ENCODE measurements at regions of chr19 and their contacts with region 1.

Region 1: GRCh38 chr19:13430790-13431582 is 75.3 kb downstream of the CACNA1A start:
- DNase-seq: peak; percentile 39
- H3K4me3 ChIP-seq: no peak overlapping the region
- H3K27ac ChIP-seq: no peak overlapping the region
- H3K4me1 ChIP-seq: peaks cover 10% of the 10 kb centered on the region
- H3K27me3 ChIP-seq: no peaks in the 10 kb centered on the region
- CTCF ChIP-seq: peak; percentile 76 to 84
- POLR2A ChIP-seq: no peak

Region 2: DNA sequence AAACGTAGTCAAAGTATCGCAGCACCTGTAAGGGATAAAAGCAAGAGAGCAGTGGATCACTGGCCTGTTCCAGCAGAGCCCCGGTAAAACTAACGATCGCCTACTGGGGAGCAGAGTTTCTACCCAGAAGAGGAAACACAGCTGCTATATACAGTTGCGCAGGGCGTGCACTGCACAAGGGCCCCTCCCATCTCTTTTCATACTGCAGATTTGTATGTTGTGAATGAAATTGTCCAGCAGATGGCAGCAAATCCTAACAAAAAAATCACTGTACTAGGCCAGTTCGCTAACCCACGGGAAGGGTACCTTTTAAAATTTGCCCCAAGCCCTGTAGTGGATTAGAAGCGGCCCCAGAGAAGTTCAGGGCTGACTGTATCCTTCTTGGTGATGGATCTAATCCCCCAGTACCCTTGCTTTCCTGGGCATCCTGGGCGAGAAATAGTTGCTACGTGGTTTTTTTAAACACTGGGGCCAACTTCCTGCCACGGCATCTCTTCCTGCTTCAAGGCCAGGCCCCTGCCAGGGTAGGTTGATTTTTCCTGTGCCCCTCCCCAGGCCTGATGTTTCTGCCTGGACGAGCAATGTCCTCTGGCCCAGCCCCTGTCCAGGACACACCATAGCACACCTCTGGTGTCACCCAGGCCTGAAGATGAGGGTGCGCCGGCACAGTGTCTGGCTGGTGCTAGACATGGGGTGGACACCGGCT is 153.7 kb before region 1 on chr19:
- CTCF ChIA-PET with region 1: interaction called, 37 read pairs
- POLR2A ChIA-PET with region 1: no interaction called
- dilution Hi-C with region 1: no loop called
- intact Hi-C with region 1: loop called (anchors 1 kb)
- DNase-seq: peak; percentile 78
- H3K4me3 ChIP-seq: no peak overlapping the region
- H3K27ac ChIP-seq: peak overlapping the region; percentile 4
- H3K4me1 ChIP-seq: peaks cover 5% of the 10 kb centered on the region
- H3K27me3 ChIP-seq: no peaks in the 10 kb centered on the region
- CTCF ChIP-seq: peak; percentile 41 to 61
- POLR2A ChIP-seq: no peak

Region 3: DNA sequence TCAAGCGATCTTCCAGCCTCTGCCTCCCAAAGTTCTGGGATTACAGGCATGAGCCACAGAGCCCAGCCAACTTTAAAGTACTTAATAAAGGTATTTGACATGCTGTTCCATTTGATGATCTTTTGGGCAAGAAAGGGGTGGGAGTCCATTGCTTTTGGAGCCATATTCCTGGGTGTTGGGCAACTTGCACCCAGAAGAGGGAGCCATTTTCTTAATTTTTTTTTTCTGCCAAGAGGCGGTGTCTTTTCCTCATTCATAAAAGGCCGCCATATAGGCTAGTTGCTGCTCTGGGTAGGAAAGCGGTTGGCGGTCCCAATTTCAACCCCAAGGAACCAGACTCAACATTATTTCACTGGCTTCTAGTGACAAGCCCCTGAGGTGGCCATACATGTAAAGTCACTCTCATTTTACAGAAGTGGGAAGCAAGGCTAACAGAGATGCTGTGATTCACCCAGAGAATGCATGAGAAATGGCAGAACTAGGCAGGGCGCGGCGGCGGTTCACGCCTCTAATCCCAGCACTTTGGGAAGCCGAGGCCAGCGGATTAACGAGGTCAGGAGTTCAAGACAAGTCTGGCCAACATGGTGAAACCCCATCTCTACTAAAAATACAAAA is 64.3 kb before region 1 on chr19:
- CTCF ChIA-PET with region 1: interaction called, 44 read pairs
- POLR2A ChIA-PET with region 1: no interaction called
- dilution Hi-C with region 1: no loop called
- intact Hi-C with region 1: loop called (anchors 1 kb)
- DNase-seq: peak; percentile 28
- H3K4me3 ChIP-seq: no peak overlapping the region
- H3K27ac ChIP-seq: no peak overlapping the region
- H3K4me1 ChIP-seq: no peaks in the 10 kb centered on the region
- H3K27me3 ChIP-seq: no peaks in the 10 kb centered on the region
- CTCF ChIP-seq: peak; percentile 46 to 48
- POLR2A ChIP-seq: no peak

Region 4: GRCh38 chr19:13382633-13382938 is 48.4 kb before region 1 on chr19:
- CTCF ChIA-PET with region 1: no interaction called
- POLR2A ChIA-PET with region 1: no interaction called
- dilution Hi-C with region 1: no loop called
- intact Hi-C with region 1: no loop called
- DNase-seq: no peak
- H3K4me3 ChIP-seq: no peak overlapping the region
- H3K27ac ChIP-seq: no peak overlapping the region
- H3K4me1 ChIP-seq: no peaks in the 10 kb centered on the region
- H3K27me3 ChIP-seq: no peaks in the 10 kb centered on the region
- CTCF ChIP-seq: no peak
- POLR2A ChIP-seq: no peak

Region 5: GRCh38 chr19:13398780-13399726 is 31.9 kb before region 1 on chr19:
- CTCF ChIA-PET with region 1: interaction called, 14 read pairs
- POLR2A ChIA-PET with region 1: no interaction called
- dilution Hi-C with region 1: no loop called
- intact Hi-C with region 1: loop called (anchors 1 kb)
- DNase-seq: peak; percentile 74
- H3K4me3 ChIP-seq: no peak overlapping the region
- H3K27ac ChIP-seq: peak overlapping the region; percentile 83
- H3K4me1 ChIP-seq: peaks cover 18% of the 10 kb centered on the region
- H3K27me3 ChIP-seq: no peaks in the 10 kb centered on the region
- CTCF ChIP-seq: no peak
- POLR2A ChIP-seq: no peak

Region 6: DNA sequence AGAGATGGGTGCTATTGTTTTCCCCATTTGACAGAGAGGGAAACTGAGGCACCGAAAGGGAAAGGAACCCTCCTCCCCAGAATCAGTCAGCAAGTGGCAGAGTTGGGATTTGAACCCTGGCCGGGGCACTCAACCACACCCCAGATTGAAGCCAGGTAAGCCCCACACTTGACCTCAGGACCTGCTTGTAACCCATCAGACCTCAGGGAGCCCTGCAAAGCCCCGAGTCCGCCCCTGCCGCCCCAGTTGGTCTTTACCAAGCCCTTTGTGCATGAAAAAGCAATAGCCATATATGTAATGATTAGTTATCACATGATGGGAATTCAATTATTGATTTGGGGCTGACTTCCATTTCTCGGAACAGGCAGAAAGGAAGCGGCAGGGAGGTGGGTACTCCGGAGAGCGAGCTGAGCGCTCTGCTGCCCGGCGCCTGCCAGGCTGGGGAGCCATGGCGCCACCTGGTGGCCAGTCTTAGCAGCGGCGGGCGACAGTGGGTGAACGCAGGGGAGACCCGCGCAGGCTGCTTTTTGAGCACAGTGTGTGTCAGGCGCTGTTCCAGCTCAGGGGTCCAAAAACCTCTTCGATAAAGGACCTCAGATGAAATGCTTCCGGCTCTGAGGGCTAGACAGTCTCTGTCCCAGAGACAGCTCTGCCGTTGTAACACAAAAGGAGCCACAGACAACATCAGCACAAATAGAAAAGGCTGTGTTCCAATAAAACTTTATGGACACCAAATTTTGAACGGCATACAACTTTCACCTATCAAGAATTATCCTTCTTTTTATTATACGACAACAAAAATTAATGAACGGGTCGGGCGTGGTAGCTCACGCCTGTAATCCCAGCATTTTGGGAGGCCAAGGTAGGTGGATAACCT is 158.2 kb after region 1 on chr19:
- CTCF ChIA-PET with region 1: interaction called, 5 read pairs
- POLR2A ChIA-PET with region 1: no interaction called
- dilution Hi-C with region 1: no loop called
- intact Hi-C with region 1: loop called (anchors 1 kb)
- DNase-seq: peak; percentile 55
- H3K4me3 ChIP-seq: no peak overlapping the region
- H3K27ac ChIP-seq: no peak overlapping the region
- H3K4me1 ChIP-seq: no peaks in the 10 kb centered on the region
- H3K27me3 ChIP-seq: no peaks in the 10 kb centered on the region
- CTCF ChIP-seq: peak; percentile 96 to 99
- POLR2A ChIP-seq: no peak

Measured in endothelial cell of umbilical vein (primary cell).